AG04449 (cell line): ENCODE measurements at regions of chr2 and their contacts with region 1.

Region 1: DNA sequence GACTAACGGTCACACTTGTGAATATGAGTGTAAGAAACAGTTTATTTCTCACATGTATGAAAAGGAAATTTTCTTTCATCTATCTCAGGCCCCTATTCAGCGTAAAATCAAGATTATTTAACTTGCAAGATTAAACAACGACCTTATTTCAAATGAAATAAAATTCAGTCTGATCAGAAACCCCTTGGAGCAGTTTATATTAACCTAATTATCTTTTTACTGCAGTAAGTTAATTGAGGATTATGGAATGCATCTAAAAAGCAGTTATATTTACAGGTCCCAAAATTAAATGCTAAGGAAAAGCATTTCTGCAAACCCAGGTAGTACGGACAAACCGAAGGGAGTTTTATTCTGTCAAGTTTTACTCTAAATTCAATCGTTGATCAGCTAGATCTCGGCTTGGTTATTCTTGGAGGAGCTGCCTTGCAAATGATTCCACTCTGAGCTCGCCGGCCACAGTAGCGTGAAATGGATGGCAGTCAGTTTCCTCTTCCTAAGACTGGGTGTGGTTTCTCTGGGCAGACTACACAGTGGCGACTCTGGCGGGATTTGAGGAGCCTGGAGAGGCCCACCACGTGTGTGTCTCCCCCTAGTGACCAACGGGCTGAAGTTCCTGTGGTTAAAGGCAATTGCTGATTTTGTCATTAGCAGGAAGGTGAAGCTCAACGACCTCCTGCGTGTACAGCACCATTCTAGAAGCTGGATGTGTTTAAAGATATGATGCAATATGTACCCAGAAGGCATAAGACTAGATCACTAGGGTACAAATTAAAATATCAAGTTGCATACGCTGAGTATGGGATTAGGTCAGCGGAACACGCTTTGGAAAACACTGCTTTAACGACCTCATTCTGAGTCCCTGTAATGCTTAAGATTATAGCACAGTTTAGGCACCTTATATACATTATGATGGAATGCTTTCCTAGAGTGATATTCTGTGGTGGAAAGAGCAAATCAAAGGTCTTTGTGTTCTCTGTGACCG is 36.4 kb downstream of the PRKRA start:
- DNase-seq: peak; percentile 68
- H3K4me3 ChIP-seq: peak overlapping the region; percentile 63
- CTCF ChIP-seq: peak; percentile 95

Region 2: GRCh38 chr2:177983183-177983788 is 431.3 kb before region 1 on chr2:
- CTCF ChIA-PET with region 1: interaction called, 20 read pairs
- POLR2A ChIA-PET with region 1: interaction called, 3 read pairs
- DNase-seq: no peak
- H3K4me3 ChIP-seq: no peak overlapping the region
- CTCF ChIP-seq: peak; percentile 85

Region 3: DNA sequence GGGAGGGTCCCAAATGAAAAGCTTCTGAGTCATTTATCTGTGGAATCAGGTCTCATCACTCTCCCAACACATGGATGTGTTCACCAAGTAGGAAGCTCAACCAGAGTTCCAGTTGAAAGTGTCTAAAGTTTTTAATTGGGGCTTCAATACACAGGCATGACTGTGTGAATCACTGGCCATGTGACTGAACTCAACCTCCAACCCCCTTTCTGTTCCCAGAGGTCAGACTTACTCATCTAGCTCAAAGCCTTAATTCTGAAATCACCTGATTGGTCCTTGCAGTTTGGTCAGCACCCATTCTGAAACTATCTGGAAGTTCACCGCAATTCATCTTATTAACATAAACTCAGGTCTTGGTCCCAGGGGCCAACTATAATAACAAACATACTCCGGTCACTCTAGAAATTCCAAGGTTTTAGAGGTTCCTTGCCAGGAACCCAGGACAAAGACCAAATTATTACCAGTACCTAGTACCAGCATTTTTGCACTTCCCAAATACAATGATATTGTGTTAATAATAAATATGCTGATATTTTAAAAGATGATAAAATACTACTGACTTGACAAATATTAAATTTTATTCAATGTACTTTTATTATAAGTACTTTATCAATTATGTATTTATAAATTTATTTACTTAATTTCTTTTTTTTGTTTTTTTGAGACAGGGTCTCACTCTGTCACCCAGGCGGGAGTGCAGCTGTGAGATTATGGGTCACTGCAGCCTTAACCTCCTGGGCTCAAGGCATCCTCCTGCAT is 313.1 kb before region 1 on chr2:
- CTCF ChIA-PET with region 1: interaction called, 13 read pairs
- POLR2A ChIA-PET with region 1: no interaction called
- DNase-seq: no peak
- H3K4me3 ChIP-seq: no peak overlapping the region
- CTCF ChIP-seq: no peak

Region 4: DNA sequence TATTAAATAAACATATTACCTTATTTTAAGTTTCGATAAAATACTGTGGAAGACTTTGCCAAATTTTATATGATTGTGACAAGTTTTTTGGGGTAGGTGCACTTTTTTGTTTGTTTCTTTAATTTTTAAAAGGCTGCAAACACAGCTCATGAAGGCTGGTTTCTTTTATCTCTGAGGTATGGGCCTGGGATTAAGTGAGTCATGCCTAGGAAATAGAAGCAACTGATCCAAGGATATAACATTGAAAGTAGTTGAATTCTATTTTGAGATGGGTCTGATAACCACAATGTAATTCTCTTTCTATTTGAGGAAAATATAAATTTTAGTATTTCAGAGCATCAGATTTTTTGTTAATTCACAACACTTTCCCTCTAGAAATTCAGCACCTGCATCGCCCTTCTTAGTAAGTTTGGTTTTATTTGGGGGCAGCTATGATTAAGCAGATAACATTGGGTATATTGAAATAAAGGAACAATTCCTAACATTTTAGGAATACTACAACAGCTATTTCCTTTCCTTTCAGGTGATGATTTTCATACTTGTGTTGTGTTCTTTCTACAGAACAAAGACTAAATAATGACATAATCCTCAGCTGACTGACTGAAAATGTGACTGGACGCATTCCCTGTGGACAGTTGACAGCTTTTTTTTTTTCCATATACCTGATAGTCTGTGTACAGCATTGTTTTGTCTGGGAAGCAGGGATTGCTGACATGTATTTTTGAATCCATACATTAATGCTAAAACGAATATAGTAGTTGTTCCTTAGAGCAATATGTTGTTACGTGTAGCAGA is 285.5 kb before region 1 on chr2:
- CTCF ChIA-PET with region 1: interaction called, 231 read pairs
- POLR2A ChIA-PET with region 1: no interaction called
- DNase-seq: no peak
- H3K4me3 ChIP-seq: no peak overlapping the region
- CTCF ChIP-seq: no peak

Region 5: DNA sequence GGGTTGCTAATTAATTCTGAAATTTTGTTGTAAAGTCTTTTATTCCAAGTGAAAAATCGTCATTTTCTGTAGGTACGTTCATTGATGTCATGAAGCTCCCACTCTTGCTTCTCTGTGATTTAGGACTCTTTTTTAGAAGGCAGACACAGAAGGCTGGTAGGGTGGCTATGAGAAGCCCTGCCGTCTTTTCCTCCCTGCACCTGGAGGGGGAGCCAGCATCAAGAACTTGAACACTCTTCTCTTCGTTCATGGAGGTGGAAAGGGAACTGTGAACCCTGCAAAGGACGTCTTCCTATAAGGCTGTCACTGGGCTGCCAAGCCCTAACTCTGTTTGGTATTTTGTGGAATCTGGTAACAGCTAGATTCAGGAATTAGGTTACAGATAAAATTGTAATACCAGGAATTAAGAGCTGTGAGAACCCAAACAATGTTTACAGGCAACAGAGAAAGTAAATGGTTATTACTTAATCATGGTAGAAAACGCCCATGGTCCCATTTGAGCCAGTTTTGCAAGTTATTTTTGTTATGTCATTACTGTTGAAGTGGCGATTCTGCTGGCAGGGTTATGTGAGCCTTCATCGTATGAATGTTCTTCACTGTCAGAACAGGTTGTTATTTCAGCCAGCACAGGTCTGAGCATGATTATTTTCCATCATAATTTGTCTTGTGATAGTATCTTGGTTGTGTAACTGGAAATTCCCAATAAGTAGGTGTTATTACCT is 108.0 kb before region 1 on chr2:
- CTCF ChIA-PET with region 1: interaction called, 24 read pairs
- POLR2A ChIA-PET with region 1: no interaction called
- DNase-seq: no peak
- H3K4me3 ChIP-seq: no peak overlapping the region
- CTCF ChIP-seq: peak; percentile 73

Region 6: DNA sequence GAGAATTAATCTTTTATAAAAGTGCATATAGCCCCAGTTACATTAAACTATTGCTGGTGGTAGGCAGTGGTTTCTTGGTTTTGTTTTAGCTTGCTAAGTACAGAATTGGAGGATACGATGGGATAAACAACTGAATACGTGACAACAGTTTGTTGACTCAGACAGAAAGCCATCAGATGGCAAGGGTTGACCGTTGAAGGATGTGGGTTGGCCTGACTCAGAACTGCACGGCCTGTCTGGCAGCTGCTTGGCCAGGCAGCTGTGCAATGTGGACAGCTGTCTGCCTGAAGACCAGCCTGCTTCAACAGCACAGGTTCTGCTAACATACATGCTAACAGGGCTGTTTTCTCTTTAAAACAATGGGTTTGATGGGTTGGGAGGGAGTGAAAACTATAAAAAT is 10.2 kb before region 1 on chr2:
- CTCF ChIA-PET with region 1: interaction called, 101 read pairs
- POLR2A ChIA-PET with region 1: interaction called, 8 read pairs
- DNase-seq: no peak
- H3K4me3 ChIP-seq: no peak overlapping the region
- CTCF ChIP-seq: no peak